ENCODE measurements at regions of chr17 and their contacts with region 1.

Region 1: GRCh38 chr17:64025732-64026294 is 5.4 kb upstream of the ICAM2 start:
- DNase-seq: peak; percentile 87
- H3K4me3 ChIP-seq: peak overlapping the region; percentile 13
- H3K27ac ChIP-seq: no peak overlapping the region
- H3K4me1 ChIP-seq: no peaks in the 10 kb centered on the region
- H3K27me3 ChIP-seq: no peaks in the 10 kb centered on the region
- CTCF ChIP-seq: peak; percentile 99

Region 2: DNA sequence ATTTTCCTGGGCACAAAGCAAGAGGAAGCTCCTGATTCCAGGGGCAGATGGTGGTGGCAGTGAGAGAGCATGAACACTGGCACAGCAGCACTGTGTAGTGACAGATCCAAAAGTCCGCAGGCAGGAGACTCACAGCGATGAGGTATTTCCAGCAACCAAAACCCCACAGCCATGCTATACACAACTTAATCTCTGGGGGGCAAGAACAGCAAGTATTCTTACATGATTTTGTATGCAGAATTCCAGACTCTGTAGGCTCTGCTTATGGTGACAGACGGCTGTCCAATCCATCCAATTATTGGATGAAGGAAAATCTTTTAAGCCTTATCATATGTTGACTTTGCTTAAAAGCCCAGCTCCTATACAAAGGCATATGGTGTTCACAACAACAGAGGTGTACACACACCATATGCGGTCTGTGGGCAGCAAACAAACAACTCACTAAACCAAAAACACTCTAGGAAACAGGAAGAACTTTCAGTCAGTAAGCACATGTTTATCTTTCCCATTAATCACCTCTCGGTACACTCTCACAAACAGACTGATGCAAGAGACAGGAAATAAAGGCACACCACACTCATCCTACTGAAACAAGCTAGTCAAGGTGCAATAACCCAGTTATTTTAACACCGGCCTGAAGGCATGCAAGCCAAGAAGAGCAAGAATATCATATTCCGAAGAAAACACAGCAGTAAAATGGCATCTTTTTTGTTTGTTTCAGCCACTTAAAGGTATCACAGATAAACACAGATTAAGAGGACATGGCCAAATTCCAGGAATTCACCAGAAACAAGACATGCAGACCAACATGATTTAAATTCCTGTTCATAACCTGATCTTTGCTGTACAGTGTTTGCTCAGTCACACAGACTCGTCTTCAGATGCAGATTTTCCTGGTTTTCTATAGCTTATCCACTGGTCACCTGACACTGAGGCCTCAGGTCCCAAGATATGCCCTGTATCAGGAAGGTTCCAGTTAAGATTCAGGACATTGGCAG is 56.3 kb after region 1 on chr17:
- CTCF ChIA-PET with region 1: no interaction called
- POLR2A ChIA-PET with region 1: no interaction called
- intact Hi-C with region 1: no loop called
- DNase-seq: peak; percentile 28
- H3K4me3 ChIP-seq: no peak overlapping the region
- H3K27ac ChIP-seq: peak overlapping the region; percentile 56
- H3K4me1 ChIP-seq: peaks cover 13% of the 10 kb centered on the region
- H3K27me3 ChIP-seq: no peaks in the 10 kb centered on the region
- CTCF ChIP-seq: no peak; the same call in 1 of the 2 replicates

Region 3: DNA sequence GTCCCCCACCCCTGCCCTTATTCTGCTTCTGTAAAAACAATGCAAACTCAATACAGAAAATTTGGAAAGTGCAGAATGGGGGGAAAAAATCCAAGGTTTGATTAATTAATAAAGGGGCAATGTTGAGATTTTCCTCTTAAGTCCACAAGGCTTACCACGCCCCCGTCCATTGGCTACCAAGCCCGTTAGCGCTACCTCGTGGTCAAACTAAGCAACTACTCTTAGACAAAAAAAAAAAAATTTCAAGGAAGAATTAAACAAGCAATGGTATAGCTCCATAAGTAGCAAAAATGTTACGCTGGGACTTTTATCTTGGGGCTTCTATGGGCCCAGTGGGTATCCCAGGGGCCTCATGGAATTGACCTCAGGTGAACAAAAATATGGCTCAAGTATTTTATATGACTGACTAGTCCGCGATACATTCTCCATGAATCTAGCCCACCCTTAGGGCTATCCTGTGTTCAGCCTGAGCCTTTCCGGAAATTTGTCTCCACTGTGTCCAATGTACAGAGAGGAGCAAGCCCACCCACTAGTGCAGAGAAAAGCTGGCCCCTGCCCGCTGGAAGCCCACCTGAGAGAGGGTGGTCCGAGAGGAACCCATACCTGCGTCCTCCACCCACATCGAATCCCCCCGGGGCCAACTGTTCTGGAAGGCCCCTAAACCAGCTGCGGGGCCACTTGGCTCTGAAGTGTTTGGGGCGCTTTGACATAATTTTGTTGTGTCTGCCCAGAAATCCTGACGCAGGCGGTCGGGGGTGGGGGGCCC is 256.3 kb after region 1 on chr17:
- CTCF ChIA-PET with region 1: interaction called, 9 read pairs
- POLR2A ChIA-PET with region 1: no interaction called
- intact Hi-C with region 1: loop called (anchors 1 kb)
- DNase-seq: peak; percentile 85
- H3K4me3 ChIP-seq: no peak overlapping the region
- H3K27ac ChIP-seq: no peak overlapping the region
- H3K4me1 ChIP-seq: peaks cover 6% of the 10 kb centered on the region
- H3K27me3 ChIP-seq: no peaks in the 10 kb centered on the region
- CTCF ChIP-seq: peak; percentile 85

Measured in A673 (cell line).